ENCODE measurements at regions of chr2 and their contacts with region 1.

Region 1: GRCh38 chr2:39124000-39124745 is 3.3 kb upstream of the SOS1 start:
- DNase-seq: peak; percentile 98

Region 2: DNA sequence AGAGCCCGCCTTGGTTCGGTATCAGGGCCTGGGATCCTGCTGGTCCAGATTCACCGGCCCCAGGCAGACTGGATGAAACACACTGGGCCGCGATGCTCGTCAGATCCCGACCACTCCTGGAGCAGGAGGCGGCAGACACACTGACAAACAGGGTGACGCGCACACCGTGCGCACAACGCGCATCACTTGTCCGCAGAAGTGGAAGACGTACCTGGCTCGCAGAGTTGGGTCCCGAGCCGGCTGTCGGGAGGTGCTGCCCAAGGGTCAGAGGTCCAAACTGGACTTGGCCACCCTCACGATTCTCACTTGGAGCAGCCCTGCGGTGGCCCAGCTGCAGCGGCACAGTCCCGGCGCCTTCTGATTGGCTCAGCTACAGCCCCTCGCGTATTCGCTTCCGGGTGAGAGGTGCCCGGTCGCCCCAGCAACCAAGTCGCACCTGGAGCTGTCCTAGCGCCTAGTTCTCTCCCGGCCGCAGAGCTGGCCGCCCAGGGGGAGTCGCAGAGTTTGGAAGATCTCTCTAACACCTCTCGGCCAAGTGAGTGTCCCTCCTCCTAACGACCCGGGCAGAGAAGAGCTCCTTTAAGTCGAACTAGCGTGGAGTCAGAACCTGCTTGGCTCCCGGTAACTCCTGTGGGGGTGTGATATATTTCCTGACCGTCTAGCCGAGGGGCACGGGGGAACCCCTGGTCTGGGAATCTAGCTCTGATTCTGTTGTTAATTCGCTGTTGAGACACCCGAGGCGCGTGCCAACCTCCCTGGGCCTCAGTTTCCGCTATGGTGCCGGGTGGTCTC is 248.4 kb before region 1 on chr2 and contains the starts of genes DHX57 and MORN2:
- intact Hi-C with region 1: no loop called
- DNase-seq: peak; percentile 93
- total RNA-seq, gene DHX57: 9.4 TPM
- total RNA-seq, gene MORN2: 12.6 TPM

Region 3: GRCh38 chr2:39059366-39059952 is 64.7 kb before region 1 on chr2:
- intact Hi-C with region 1: loop called (anchors 5 kb)
- DNase-seq: no peak

Region 4: GRCh38 chr2:39394516-39394961 is 270.4 kb after region 1 on chr2:
- intact Hi-C with region 1: no loop called
- DNase-seq: no peak

Measured in cardiac septum (tissue), 1 donor.